ENCODE measurements at regions of chr12 and their contacts with region 1.

Region 1: GRCh38 chr12:103207936-103208335 is 250.5 kb downstream of the ASCL1 start:
- DNase-seq: no peak
- ATAC-seq: peak; percentile 42; the same call in 1 of the 3 replicates
- H3K4me3 ChIP-seq: no peak overlapping the region
- H3K27ac ChIP-seq: no peak overlapping the region
- H3K4me1 ChIP-seq: no peaks in the 10 kb centered on the region
- H3K27me3 ChIP-seq: no peaks in the 10 kb centered on the region
- CTCF ChIP-seq: no peak
- EP300 ChIP-seq: no peak
- POLR2A ChIP-seq: no peak
- RAD21 ChIP-seq: no peak

Region 2: DNA sequence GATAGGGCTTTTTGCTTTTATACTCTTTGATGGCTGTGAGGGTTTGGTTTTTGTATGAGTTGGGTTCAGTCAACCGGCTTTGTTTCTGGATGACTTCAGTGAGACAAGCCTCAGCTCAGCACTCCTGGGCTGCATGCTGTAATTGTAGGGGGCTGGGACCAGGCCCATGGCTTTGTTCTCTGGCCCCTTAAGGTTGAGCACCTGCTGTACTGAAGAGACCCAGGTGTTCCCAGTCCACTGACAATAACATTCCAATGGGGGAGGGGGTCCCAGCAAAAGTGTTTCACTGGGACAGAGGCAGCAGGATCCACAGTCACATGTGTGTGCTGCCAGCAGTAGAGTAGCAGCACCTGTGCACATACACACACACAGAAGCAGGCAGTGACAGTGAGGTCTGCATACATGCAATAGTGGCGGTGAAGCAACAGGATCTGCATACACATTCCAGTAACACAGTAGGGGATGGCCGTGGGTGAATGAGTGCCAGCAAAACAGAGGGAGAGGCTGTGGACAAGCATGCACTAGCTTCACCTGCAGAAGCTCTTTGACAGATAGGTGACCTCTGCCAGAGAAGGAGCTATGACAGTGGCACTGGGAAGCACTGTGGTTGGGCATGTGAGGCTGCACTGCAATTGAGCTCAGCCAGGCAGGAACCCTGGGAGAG is 10.1 kb before region 1 on chr12:
- CTCF ChIA-PET with region 1: interaction called, 4 read pairs
- POLR2A ChIA-PET with region 1: no interaction called
- RAD21 ChIA-PET with region 1: no interaction called
- SMC1A ChIA-PET with region 1: interaction called, 14 read pairs
- in situ Hi-C with region 1: no loop called
- intact Hi-C with region 1: no loop called
- DNase-seq: no peak
- ATAC-seq: no peak
- H3K4me3 ChIP-seq: no peak overlapping the region
- H3K27ac ChIP-seq: no peak overlapping the region
- H3K4me1 ChIP-seq: no peaks in the 10 kb centered on the region
- H3K27me3 ChIP-seq: no peaks in the 10 kb centered on the region
- CTCF ChIP-seq: no peak
- EP300 ChIP-seq: no peak
- POLR2A ChIP-seq: no peak
- RAD21 ChIP-seq: no peak

Region 3: DNA sequence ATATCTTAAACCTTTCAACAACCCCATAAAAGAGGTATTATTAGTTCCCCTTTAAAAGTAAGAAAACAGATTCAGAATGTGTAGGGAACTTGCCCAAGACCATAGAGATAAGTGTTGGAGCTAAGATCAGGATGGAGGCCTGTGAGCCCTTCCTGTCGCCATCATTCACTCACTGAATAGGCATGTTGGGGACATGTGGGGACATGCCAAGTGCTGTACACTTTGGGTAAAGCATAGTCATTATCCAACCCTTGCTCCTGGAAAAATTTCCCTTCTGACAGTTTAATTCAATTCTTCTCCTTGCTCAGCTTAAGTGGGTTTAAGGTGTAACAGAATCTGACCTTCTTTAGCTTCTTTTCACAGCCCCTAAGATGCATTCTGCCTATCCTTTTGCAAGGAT is 315.8 kb after region 1 on chr12:
- CTCF ChIA-PET with region 1: no interaction called
- POLR2A ChIA-PET with region 1: no interaction called
- RAD21 ChIA-PET with region 1: no interaction called
- SMC1A ChIA-PET with region 1: no interaction called
- in situ Hi-C with region 1: no loop called
- intact Hi-C with region 1: no loop called
- DNase-seq: no peak
- ATAC-seq: no peak
- H3K4me3 ChIP-seq: no peak overlapping the region
- H3K27ac ChIP-seq: no peak overlapping the region
- H3K4me1 ChIP-seq: no peaks in the 10 kb centered on the region
- H3K27me3 ChIP-seq: no peaks in the 10 kb centered on the region
- CTCF ChIP-seq: no peak
- EP300 ChIP-seq: no peak
- POLR2A ChIP-seq: no peak
- RAD21 ChIP-seq: no peak

Measured in GM12878 (cell line).